Activated CD8-positive, alpha-beta T cell treated with anti-CD3 and anti-CD28 coated beads for 36 hours (primary cell): ENCODE measurements at regions of chr1 and their contacts with region 1.

Region 1: DNA sequence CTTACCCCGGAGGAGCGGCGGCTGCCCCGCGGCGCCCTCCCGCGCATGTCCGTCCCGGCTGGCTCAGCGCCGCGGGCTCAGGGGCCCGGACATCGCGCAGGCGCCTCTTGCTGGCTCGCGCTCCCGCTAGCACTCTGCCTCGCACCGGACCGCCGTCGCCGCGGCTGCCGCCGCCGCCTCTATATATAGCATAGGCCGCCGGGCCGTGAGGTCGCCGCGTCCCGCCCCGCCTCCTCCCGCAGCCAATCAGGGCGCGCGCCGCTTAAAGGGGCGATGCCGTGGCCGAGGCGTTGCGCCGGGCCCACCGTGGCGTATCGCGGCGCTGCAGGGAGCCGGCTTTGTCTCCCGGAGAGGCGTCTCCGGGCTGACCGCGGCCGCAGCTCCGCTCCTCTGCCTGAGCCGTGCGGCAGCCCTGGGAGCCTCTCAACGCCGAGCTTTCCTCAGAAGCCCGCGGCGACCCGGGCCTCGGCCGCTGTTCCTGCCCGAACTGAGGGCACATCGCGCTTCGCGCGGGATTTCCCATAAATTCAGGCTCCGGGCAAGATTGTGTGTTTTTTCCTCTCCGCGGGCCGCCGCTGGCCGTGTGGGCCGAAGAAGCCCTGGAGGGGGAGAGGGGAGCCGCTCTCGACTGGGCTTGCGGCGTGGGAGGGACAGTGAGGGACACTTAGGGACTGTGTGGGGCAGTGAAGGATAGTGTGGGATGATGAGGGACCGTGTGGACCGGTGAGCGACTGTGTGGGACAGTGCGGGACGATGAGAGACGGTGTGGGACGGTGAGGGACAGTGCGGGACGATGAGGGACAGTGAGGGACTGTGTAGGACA is at the start of gene ERRFI1:
- DNase-seq: peak; percentile 89
- ATAC-seq: peak; percentile 96
- H3K4me3 Mint-ChIP-seq: peak within 1 kb of the TSS; percentile 79
- H3K27ac Mint-ChIP-seq: peak within 1 kb of the TSS; percentile 47
- H3K4me1 Mint-ChIP-seq: peaks cover 9% of the 10 kb centered on the region
- H3K27me3 Mint-ChIP-seq: peaks cover 32% of the 10 kb centered on the region
- CTCF ChIP-seq: no peak
- total RNA-seq, gene ERRFI1: 1.6 to 2.2 TPM

Region 2: DNA sequence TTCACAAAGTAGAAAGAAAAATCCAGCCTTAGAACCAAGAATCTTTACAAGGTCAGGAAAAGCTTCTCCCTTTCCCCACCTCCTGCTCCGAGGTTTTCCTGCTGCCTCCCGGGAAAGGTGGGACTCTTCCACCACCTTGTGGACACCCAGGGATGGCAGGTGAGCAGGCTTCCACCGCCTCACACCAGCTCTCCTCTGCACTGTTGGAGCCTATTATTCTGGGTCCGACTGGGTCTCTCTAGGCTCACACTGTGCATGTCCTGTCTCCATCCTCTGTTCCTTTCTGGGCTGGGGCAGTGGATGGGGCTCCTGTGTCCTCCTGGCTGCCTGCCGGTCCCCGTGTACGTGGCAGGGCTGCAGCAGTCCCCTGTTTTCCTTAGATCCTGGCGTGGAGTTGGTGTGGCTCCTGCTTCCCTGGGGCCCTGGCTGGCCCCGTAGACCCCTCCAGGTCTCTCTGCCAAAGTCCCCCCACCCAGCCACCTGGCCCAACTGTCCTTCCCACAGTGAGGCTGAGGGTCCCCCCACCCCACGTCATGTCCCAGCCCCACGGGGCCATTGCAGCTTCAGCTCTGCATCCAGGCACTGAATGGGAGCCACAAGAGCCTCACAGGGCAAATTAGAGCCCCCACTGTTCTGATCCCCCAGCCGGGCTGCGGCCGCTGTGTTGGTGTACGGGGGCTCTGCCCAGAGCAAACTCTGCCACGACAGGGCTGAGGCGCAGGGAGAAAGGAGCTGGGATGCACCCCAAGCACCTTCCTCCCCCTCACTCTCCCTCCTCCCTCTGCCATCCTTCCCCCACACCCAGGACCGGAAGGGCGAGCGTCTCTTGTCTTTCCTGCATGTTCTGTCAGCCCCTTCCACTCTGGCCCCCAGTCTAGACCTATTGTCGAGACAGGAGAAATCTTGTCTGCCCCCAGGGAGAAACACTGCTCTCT is 288.2 kb after region 1 on chr1:
- CTCF ChIA-PET with region 1: interaction called, 37 read pairs
- POLR2A ChIA-PET with region 1: no interaction called
- intact Hi-C with region 1: loop called (anchors 5 kb)
- DNase-seq: peak; percentile 55
- ATAC-seq: peak; percentile 61
- H3K4me3 Mint-ChIP-seq: no peak overlapping the region
- H3K27ac Mint-ChIP-seq: no peak overlapping the region
- H3K4me1 Mint-ChIP-seq: peaks cover 7% of the 10 kb centered on the region
- H3K27me3 Mint-ChIP-seq: peaks cover 29% of the 10 kb centered on the region
- CTCF ChIP-seq: peak; percentile 79